Heart right ventricle (tissue), 16 donors: ENCODE measurements at regions of chr14 and their contacts with region 1.

Region 1: DNA sequence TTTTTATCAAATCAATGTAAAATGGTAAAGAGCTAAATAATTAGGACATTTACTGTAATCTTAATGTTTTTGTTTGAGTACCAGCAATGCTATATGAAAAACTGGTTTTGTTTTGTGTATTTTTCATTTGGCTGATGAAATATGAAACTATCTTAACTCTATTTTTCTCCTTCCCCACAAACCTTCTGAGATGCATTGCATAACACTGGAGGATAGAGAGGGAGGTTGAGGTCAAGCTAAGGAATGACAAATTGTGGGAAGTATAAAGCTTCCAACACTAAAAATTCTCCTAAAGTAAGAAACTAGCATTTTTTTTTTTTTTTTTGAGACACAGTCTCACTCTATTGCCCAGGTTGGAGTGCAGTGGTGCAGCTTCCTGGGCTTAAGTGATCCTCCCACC is 31.5 kb upstream of the SRP54 start:
- DNase-seq: no peak
- ATAC-seq: no peak
- H3K4me3 ChIP-seq: no peak overlapping the region
- H3K27ac ChIP-seq: no peak overlapping the region
- H3K4me1 ChIP-seq: no peaks in the 10 kb centered on the region
- H3K27me3 ChIP-seq: no peaks in the 10 kb centered on the region
- CTCF ChIP-seq: no peak

Region 2: GRCh38 chr14:34895277-34895676 is 56.0 kb before region 1 on chr14:
- intact Hi-C with region 1: loop called in 1 of 10 experiments (anchors 10 kb)
- DNase-seq: no peak
- ATAC-seq: no peak
- H3K4me3 ChIP-seq: no peak overlapping the region
- H3K27ac ChIP-seq: no peak overlapping the region
- H3K4me1 ChIP-seq: no peaks in the 10 kb centered on the region
- H3K27me3 ChIP-seq: no peaks in the 10 kb centered on the region
- CTCF ChIP-seq: no peak